ENCODE measurements at regions of chr12 and their contacts with region 1.

Region 1: GRCh38 chr12:98373025-98373554 is 142.3 kb upstream of the TMPO start:
- DNase-seq: no peak
- H3K4me3 ChIP-seq: no peak overlapping the region
- H3K27ac ChIP-seq: no peak overlapping the region
- H3K4me1 ChIP-seq: no peaks in the 10 kb centered on the region
- H3K27me3 ChIP-seq: no peaks in the 10 kb centered on the region
- CTCF ChIP-seq: peak; percentile 33

Region 2: GRCh38 chr12:98227162-98227561 is 145.9 kb before region 1 on chr12:
- intact Hi-C with region 1: loop called (anchors 10 kb)
- DNase-seq: no peak
- H3K4me3 ChIP-seq: no peak overlapping the region
- H3K27ac ChIP-seq: no peak overlapping the region
- H3K4me1 ChIP-seq: no peaks in the 10 kb centered on the region
- H3K27me3 ChIP-seq: no peaks in the 10 kb centered on the region
- CTCF ChIP-seq: no peak

Region 3: GRCh38 chr12:98308141-98308540 is 64.9 kb before region 1 on chr12:
- intact Hi-C with region 1: no loop called
- DNase-seq: no peak
- H3K4me3 ChIP-seq: no peak overlapping the region
- H3K27ac ChIP-seq: no peak overlapping the region
- H3K4me1 ChIP-seq: no peaks in the 10 kb centered on the region
- H3K27me3 ChIP-seq: no peaks in the 10 kb centered on the region
- CTCF ChIP-seq: no peak

Measured in colonic mucosa (tissue), 4 donors.